H1 (cell line): ENCODE measurements at regions of chr19 and their contacts with region 1.

Region 1: GRCh38 chr19:27974082-27974513 is 1238.9 kb downstream of the UQCRFS1 start:
- DNase-seq: peak in 1 of 2 experiments; percentile 52
- H3K4me3 ChIP-seq: no peak overlapping the region
- H3K27ac ChIP-seq: no peak overlapping the region
- H3K4me1 ChIP-seq: peaks cover 0 to 5% (median 2%) of the 10 kb centered on the region in 4 experiments; a peak in 2 of 7 replicates
- H3K27me3 ChIP-seq: no peaks in the 10 kb centered on the region; a peak in 1 of 7 replicates
- CTCF ChIP-seq: peak; percentile 80 to 86 (median 85)
- EP300 ChIP-seq: no peak
- POLR2A ChIP-seq: no peak
- RAD21 ChIP-seq: peak; percentile 97

Region 2: GRCh38 chr19:27905074-27905473 is 69.0 kb before region 1 on chr19:
- CTCF ChIA-PET with region 1: no interaction called
- POLR2A ChIA-PET with region 1: no interaction called
- DNase-seq: no peak
- H3K4me3 ChIP-seq: no peak overlapping the region
- H3K27ac ChIP-seq: no peak overlapping the region
- H3K4me1 ChIP-seq: no peaks in the 10 kb centered on the region
- H3K27me3 ChIP-seq: no peaks in the 10 kb centered on the region
- CTCF ChIP-seq: no peak
- EP300 ChIP-seq: no peak
- POLR2A ChIP-seq: no peak
- RAD21 ChIP-seq: no peak

Region 3: DNA sequence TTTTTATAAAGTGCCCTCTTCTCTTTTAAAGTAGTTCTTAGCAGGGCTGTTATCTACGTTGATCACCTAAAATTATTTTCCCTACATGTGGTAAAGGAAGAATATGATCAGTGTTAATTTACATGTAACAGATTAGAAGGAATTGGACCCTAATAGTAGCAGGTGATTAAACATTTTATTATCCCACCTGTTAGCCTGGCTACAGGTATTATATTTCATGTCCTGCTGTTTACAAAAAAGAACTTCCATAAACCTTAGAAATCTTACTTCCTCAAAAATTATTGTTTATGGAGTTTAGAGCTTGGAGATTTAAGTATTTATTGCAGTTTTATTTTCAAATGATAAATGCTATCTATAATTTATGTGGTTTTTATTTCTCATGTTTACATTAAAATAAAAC is 12.2 kb after region 1 on chr19:
- CTCF ChIA-PET with region 1: interaction called, 12 read pairs
- POLR2A ChIA-PET with region 1: no interaction called
- DNase-seq: no peak
- H3K4me3 ChIP-seq: no peak overlapping the region
- H3K27ac ChIP-seq: no peak overlapping the region
- H3K4me1 ChIP-seq: no peaks in the 10 kb centered on the region
- H3K27me3 ChIP-seq: no peaks in the 10 kb centered on the region
- CTCF ChIP-seq: no peak
- EP300 ChIP-seq: no peak
- POLR2A ChIP-seq: no peak
- RAD21 ChIP-seq: no peak

Region 4: GRCh38 chr19:27993619-27994570 is 19.8 kb after region 1 on chr19:
- CTCF ChIA-PET with region 1: interaction called, 10 read pairs
- POLR2A ChIA-PET with region 1: no interaction called
- DNase-seq: no peak
- H3K4me3 ChIP-seq: no peak overlapping the region
- H3K27ac ChIP-seq: no peak overlapping the region
- H3K4me1 ChIP-seq: no peaks in the 10 kb centered on the region
- H3K27me3 ChIP-seq: no peaks in the 10 kb centered on the region
- CTCF ChIP-seq: no peak
- EP300 ChIP-seq: no peak
- POLR2A ChIP-seq: no peak
- RAD21 ChIP-seq: no peak

Region 5: GRCh38 chr19:28009696-28010095 is 35.6 kb after region 1 on chr19:
- CTCF ChIA-PET with region 1: interaction called, 12 read pairs
- POLR2A ChIA-PET with region 1: no interaction called
- DNase-seq: no peak
- H3K4me3 ChIP-seq: no peak overlapping the region
- H3K27ac ChIP-seq: no peak overlapping the region
- H3K4me1 ChIP-seq: no peaks in the 10 kb centered on the region
- H3K27me3 ChIP-seq: no peaks in the 10 kb centered on the region
- CTCF ChIP-seq: no peak
- EP300 ChIP-seq: no peak
- POLR2A ChIP-seq: no peak
- RAD21 ChIP-seq: no peak

Region 6: DNA sequence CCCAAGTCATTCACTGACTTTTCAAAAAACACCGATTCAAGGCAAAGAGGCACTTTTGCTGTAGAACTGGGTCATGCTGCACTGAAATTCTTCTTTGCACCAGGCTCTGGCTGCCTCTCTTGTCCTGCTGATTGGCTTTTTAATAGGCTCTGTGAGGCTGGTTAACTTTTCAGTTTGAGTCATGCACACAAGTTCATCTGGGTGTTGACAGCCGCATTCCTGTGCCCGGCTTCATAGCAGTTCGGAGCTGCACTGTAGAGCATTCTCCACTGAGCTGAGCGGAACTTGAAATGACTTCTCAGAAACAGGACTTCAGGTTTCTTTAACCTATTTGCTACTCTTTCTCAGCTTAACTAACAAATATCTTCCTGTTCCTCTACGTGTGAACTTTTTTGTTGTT is 260.5 kb after region 1 on chr19:
- CTCF ChIA-PET with region 1: interaction called, 28 read pairs
- POLR2A ChIA-PET with region 1: no interaction called
- DNase-seq: no peak
- H3K4me3 ChIP-seq: no peak overlapping the region
- H3K27ac ChIP-seq: no peak overlapping the region
- H3K4me1 ChIP-seq: no peaks in the 10 kb centered on the region; a peak in 2 of 7 replicates
- H3K27me3 ChIP-seq: no peaks in the 10 kb centered on the region
- CTCF ChIP-seq: no peak
- EP300 ChIP-seq: no peak
- POLR2A ChIP-seq: no peak
- RAD21 ChIP-seq: no peak